ENCODE measurements at regions of chr1 and their contacts with region 1.

Region 1: GRCh38 chr1:1122078-1122811 is 6.4 kb upstream of the C1orf159 start:
- DNase-seq: peak; percentile 92

Region 2: GRCh38 chr1:890661-891060 is 231.6 kb before region 1 on chr1:
- intact Hi-C with region 1: no loop called
- DNase-seq: no peak

Region 3: DNA sequence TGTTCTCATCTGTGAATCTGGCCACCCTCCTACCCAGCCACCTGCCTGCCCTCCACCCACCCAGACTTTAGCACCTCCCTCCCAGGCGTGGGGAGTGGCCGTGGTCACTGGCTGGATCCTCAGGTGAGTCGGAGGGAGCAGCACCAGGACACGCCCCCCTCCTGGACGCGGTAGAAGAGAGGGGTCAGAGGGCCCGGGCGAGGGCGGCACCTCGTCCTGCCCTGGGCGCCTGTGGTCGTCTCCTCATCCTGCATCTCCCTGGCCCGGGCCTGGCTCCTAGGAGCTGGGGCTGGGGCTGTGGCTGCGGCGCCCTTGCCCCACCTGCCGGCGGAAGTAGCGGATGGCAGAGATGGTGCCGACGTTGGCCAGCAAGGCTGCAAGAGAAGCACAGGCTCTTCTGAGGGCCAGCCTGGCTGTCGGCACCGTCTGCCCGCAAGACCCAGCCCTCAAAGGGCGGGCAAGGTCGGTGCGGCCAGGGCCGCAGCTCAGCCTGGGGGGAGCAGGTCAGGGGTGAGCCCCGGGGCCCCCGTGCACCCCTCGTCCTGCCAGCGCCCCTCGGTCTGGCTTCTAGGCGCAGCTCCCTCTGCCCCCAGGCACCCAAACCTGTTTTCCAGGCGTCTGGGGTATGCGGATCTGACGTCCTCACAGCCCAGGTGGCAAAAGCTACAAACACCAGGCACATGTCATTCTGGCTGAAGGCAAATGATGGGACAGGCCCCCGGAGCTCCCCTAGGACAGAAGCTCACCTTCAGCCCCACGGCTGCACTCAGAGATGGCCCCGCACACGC is 146.2 kb before region 1 on chr1:
- intact Hi-C with region 1: no loop called
- DNase-seq: no peak

Region 4: DNA sequence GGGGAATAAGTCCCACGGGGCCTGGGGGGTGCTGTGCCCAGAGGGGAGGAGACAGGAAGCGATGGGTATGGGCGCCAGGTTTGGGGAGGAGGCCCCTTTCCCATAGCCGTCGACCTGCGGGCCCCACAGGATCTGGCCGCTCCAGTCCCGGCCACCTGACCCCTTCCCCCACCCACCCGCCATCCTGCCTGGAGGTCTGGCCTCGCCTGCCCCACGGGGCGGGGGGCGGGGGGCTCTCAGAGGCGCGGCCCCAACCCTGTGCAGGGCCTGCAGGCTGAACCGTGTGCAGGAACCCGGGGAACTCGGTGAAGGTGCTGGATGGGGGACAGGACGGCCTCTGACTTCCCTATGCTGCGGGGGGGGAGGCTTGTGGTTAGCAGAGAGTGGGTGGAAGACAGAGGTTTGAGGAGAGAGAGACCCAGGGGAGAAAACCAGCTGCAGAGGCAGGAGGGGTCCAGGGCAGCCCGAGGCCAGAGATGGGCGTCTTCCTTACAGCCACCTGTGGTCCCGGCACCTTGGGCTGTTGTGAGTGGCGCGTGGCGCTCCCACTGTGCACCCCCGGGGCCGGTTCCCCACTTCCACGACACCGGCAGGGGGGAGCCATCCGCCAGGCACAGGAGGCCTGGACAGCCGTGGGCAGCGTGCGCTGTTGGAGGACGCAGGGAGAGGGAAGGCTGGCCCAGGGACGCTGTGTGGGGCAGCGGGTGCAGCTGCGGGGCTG is 86.6 kb after region 1 on chr1:
- intact Hi-C with region 1: no loop called
- DNase-seq: no peak

Region 5: GRCh38 chr1:1250786-1251284 is 128.6 kb after region 1 on chr1:
- intact Hi-C with region 1: loop called (anchors 2 kb)
- DNase-seq: no peak

Region 6: GRCh38 chr1:1291548-1292441 is 169.6 kb after region 1 on chr1:
- intact Hi-C with region 1: loop called (anchors 1 kb)
- DNase-seq: no peak